Endothelial cell of umbilical vein (primary cell): ENCODE measurements at regions of chr1 and their contacts with region 1.

Region 1: GRCh38 chr1:20574686-20575540 is 14.0 kb upstream of the CDA start:
- DNase-seq: peak; percentile 87
- H3K4me3 ChIP-seq: no peak overlapping the region
- H3K27ac ChIP-seq: no peak overlapping the region
- H3K4me1 ChIP-seq: peaks cover 5% of the 10 kb centered on the region
- H3K27me3 ChIP-seq: peaks cover 5 to 6% of the 10 kb centered on the region in 2 experiments
- CTCF ChIP-seq: peak; percentile 74 to 88
- POLR2A ChIP-seq: no peak

Region 2: DNA sequence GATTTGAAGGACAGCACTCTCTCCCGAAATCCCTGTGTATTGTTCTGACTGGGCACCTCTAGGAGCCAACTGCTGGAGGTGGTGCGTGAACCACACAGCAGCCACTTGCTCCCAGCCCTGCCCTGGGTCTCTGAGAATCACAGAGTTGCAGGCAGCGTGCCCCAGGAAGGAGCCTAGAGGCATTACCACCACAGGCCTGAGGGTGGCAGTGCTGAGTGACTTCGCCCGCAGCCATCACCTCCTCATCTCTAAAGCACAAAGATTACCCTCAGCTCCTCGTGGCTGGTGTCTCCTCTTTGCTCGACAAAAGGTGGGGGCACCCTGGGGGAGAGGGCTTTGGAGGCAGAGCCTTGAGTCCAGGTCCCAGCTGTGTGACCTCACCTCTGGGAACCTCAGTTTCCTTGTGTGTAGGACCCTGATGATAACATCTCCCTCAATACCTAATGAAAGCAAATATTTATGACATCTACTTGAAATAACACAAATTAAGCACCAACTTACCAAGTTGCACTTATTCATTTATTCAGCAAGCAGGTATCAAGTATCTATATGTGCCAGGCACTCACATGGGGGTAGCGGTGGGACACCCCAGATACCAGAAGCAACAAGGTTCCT is 197.9 kb before region 1 on chr1:
- CTCF ChIA-PET with region 1: no interaction called
- POLR2A ChIA-PET with region 1: no interaction called
- dilution Hi-C with region 1: no loop called
- intact Hi-C with region 1: no loop called
- DNase-seq: peak; percentile 58
- H3K4me3 ChIP-seq: no peak overlapping the region
- H3K27ac ChIP-seq: no peak overlapping the region
- H3K4me1 ChIP-seq: no peaks in the 10 kb centered on the region
- H3K27me3 ChIP-seq: no peaks in the 10 kb centered on the region
- CTCF ChIP-seq: peak; percentile 73 to 91
- POLR2A ChIP-seq: no peak

Region 3: GRCh38 chr1:20521960-20522861 is 52.7 kb before region 1 on chr1:
- CTCF ChIA-PET with region 1: interaction called, 11 read pairs
- POLR2A ChIA-PET with region 1: no interaction called
- dilution Hi-C with region 1: no loop called
- intact Hi-C with region 1: loop called (anchors 5 kb)
- DNase-seq: peak; percentile 83
- H3K4me3 ChIP-seq: no peak overlapping the region
- H3K27ac ChIP-seq: no peak overlapping the region
- H3K4me1 ChIP-seq: no peaks in the 10 kb centered on the region
- H3K27me3 ChIP-seq: peaks cover 3 to 6% of the 10 kb centered on the region in 2 experiments
- CTCF ChIP-seq: peak; percentile 76 to 88
- POLR2A ChIP-seq: no peak

Region 4: GRCh38 chr1:20594746-20595145 is 19.8 kb after region 1 on chr1:
- CTCF ChIA-PET with region 1: interaction called, 19 read pairs
- POLR2A ChIA-PET with region 1: no interaction called
- dilution Hi-C with region 1: no loop called
- intact Hi-C with region 1: no loop called
- DNase-seq: no peak
- H3K4me3 ChIP-seq: no peak overlapping the region
- H3K27ac ChIP-seq: no peak overlapping the region
- H3K4me1 ChIP-seq: peaks cover 4% of the 10 kb centered on the region
- H3K27me3 ChIP-seq: peaks cover 2 to 6% of the 10 kb centered on the region in 2 experiments
- CTCF ChIP-seq: no peak
- POLR2A ChIP-seq: no peak

Region 5: DNA sequence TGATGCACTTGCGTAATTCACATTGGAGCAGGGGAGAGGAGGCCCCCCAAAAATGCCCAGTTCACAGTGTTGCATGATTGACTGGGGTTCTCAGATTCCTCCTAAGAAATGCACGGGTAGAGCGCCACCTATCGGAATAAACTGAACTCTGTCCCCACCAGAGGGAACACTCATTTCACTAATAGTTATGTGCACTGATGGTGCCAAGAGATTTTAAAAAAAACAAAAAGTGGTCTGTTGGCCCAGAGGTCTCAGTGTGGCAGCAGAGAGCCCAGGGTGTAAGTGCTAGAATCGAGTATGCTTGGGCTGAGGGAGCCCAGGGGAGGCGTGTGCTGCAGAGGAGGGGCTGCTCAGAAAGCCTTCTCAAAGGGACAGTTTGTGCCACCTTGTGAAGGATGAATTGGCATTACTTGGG is 65.3 kb after region 1 on chr1:
- CTCF ChIA-PET with region 1: interaction called, 173 read pairs
- POLR2A ChIA-PET with region 1: no interaction called
- dilution Hi-C with region 1: no loop called
- intact Hi-C with region 1: loop called (anchors 1 kb)
- DNase-seq: peak; percentile 58
- H3K4me3 ChIP-seq: no peak overlapping the region
- H3K27ac ChIP-seq: no peak overlapping the region
- H3K4me1 ChIP-seq: no peaks in the 10 kb centered on the region
- H3K27me3 ChIP-seq: no peaks in the 10 kb centered on the region
- CTCF ChIP-seq: peak; percentile 67 to 84
- POLR2A ChIP-seq: no peak

Region 6: DNA sequence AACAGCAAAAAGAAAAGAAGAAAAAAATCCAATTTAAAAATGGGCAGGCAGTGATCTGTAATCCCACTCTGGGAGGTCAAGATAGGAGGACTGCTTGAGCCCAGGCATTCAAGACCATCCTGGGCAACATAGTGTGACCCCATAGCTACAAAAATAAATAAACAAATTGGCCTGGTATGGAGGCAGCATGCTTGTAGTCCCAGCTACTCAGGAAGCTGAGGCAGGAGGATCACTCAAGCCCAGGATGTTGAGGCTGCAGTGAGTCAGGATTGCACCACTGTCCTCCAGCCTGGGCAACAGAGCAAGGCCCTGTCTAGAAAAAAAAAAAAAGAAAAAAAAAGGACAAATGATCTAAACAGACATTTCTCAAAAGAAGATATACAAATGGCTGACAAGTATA is 502.2 kb after region 1 on chr1:
- CTCF ChIA-PET with region 1: no interaction called
- POLR2A ChIA-PET with region 1: no interaction called
- dilution Hi-C with region 1: no loop called
- intact Hi-C with region 1: no loop called
- DNase-seq: peak; percentile 77
- H3K4me3 ChIP-seq: no peak overlapping the region
- H3K27ac ChIP-seq: peak overlapping the region; percentile 8
- H3K4me1 ChIP-seq: peaks cover 16% of the 10 kb centered on the region
- H3K27me3 ChIP-seq: no peaks in the 10 kb centered on the region
- CTCF ChIP-seq: no peak
- POLR2A ChIP-seq: no peak